Activated CD4-positive, alpha-beta memory T cell treated with anti-CD3 and anti-CD28 coated beads for 36 hours (primary cell): ENCODE measurements at regions of chr15 and their contacts with region 1.

Region 1: GRCh38 chr15:45198337-45199135 is 10.8 kb upstream of the SHF start:
- DNase-seq: peak; percentile 98
- H3K4me3 Mint-ChIP-seq: no peak overlapping the region
- H3K27ac Mint-ChIP-seq: no peak overlapping the region
- H3K4me1 Mint-ChIP-seq: peaks cover 13% of the 10 kb centered on the region
- H3K27me3 Mint-ChIP-seq: peaks cover 3% of the 10 kb centered on the region

Region 2: GRCh38 chr15:45126535-45127158 is 71.9 kb before region 1 on chr15:
- CTCF ChIA-PET with region 1: interaction called, 5 read pairs
- POLR2A ChIA-PET with region 1: no interaction called
- intact Hi-C with region 1: loop called (anchors 1 kb)
- DNase-seq: no peak
- H3K4me3 Mint-ChIP-seq: no peak overlapping the region
- H3K27ac Mint-ChIP-seq: no peak overlapping the region
- H3K4me1 Mint-ChIP-seq: no peaks in the 10 kb centered on the region
- H3K27me3 Mint-ChIP-seq: peaks cover 44% of the 10 kb centered on the region

Region 3: DNA sequence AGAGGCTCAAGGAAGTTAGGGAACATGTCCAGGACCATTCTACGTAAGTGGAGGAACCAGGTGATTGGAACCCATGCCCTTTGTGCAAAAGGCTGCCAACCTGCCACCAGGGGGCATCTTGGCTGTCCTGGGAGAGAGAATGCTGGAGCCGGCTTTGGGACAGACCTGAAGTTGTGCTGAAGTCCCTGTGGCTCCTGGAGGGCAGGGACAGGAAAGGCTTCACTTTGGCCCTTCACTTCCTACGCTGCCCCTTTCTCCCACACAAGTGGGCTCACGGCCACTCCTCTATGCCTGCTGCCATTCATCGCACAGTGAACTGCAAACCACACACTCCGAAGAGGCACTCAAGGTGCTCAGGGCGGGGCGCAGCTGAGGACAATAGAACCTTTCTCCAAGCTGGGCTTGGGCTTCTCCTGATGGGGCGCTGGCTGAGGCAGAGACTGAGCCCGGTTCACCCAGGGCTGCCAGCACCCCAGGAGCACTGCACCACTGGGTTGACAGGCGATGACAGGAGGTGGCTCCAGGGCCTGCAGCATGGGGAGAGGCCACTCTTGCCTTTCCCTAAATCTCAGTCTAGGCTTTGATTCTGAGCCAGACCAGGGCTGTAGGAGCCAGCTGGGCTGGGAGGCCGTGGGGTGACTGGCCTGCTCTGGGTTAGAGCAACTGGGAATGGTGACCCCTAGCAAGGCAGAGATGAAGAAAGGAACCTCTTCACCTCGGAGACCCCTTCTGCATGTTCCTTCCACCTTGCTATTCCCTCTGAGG is 19.1 kb before region 1 on chr15:
- CTCF ChIA-PET with region 1: interaction called, 19 read pairs
- POLR2A ChIA-PET with region 1: no interaction called
- intact Hi-C with region 1: no loop called
- DNase-seq: peak; percentile 63
- H3K4me3 Mint-ChIP-seq: no peak overlapping the region
- H3K27ac Mint-ChIP-seq: no peak overlapping the region
- H3K4me1 Mint-ChIP-seq: peaks cover 13% of the 10 kb centered on the region
- H3K27me3 Mint-ChIP-seq: no peaks in the 10 kb centered on the region

Region 4: DNA sequence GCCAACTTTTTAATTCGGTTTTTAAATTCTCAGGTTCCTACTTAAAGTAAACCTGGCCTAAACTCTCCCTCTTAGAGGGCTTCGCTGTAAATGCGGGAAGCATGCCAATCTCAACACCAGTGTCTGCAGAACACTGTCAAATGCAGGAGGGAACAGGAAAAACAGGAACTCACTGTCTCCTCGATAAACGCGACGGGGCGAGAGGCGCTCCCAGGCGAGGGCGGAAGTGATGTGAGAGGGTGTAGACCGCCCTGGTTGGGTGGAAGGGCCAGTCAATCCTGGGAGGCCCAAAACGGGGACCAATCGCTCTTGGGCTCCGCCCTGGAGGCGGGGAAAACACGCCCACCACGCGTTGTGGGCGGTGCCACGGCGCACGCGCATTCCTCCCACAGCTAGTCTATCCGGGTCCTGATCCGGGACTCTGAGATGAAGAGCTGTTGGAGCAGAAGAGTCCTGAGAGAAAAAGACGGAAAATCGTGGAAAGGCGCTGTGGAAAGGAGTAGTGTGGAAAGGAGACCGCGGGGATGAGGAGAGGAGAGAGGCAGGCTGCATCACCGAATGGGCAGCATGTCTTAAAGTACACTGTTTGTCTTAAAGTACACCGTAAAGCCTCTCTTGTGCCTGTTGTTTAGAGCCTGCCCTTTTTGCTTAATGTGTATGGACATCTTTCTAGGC is 80.6 kb after region 1 on chr15:
- CTCF ChIA-PET with region 1: interaction called, 4 read pairs
- POLR2A ChIA-PET with region 1: interaction called, 7 read pairs
- intact Hi-C with region 1: loop called (anchors 1 kb)
- DNase-seq: peak; percentile 98
- H3K4me3 Mint-ChIP-seq: peak overlapping the region; percentile 85
- H3K27ac Mint-ChIP-seq: peak overlapping the region; percentile 57
- H3K4me1 Mint-ChIP-seq: peaks cover 10% of the 10 kb centered on the region
- H3K27me3 Mint-ChIP-seq: no peaks in the 10 kb centered on the region

Region 5: GRCh38 chr15:45641999-45642932 is 443.7 kb after region 1 on chr15:
- CTCF ChIA-PET with region 1: no interaction called
- POLR2A ChIA-PET with region 1: no interaction called
- intact Hi-C with region 1: loop called (anchors 1 kb)
- DNase-seq: no peak
- H3K4me3 Mint-ChIP-seq: no peak overlapping the region
- H3K27ac Mint-ChIP-seq: peak overlapping the region; percentile 97
- H3K4me1 Mint-ChIP-seq: peaks cover 99% of the 10 kb centered on the region
- H3K27me3 Mint-ChIP-seq: no peaks in the 10 kb centered on the region